OCI-LY7 (cell line): ENCODE measurements at regions of chr6 and their contacts with region 1.

Region 1: DNA sequence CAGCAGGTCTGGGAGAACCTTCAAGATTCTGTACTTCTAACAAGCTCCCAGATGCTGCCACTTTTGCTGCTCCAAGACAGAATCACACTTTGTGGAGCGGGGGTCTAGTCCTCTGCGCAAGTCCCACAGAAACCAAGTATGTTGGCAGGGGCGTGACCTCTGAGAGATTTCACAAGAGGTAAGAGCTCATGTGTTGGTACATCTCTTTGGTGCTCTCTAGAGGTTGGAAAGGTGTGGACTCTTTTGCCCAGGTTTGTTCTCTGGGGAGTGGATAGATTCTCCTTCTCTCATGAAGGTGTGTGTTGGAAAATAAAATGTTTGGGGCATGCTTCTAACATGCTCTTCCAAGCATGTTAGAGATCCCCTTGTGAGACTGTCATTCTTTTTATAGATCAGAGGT is 340.9 kb upstream of the IRAK1BP1 start:
- DNase-seq: no peak
- H3K4me3 ChIP-seq: no peak overlapping the region
- H3K27ac ChIP-seq: no peak overlapping the region
- H3K4me1 ChIP-seq: no peaks in the 10 kb centered on the region
- CTCF ChIP-seq: no peak

Region 2: GRCh38 chr6:76992553-76992952 is 1533.9 kb before region 1 on chr6:
- CTCF ChIA-PET with region 1: no interaction called
- POLR2A ChIA-PET with region 1: interaction called, 10 read pairs
- intact Hi-C with region 1: no loop called
- DNase-seq: no peak
- H3K4me3 ChIP-seq: no peak overlapping the region
- H3K27ac ChIP-seq: no peak overlapping the region
- H3K4me1 ChIP-seq: no peaks in the 10 kb centered on the region
- CTCF ChIP-seq: no peak